ENCODE measurements at regions of chr15 and their contacts with region 1.

Region 1: DNA sequence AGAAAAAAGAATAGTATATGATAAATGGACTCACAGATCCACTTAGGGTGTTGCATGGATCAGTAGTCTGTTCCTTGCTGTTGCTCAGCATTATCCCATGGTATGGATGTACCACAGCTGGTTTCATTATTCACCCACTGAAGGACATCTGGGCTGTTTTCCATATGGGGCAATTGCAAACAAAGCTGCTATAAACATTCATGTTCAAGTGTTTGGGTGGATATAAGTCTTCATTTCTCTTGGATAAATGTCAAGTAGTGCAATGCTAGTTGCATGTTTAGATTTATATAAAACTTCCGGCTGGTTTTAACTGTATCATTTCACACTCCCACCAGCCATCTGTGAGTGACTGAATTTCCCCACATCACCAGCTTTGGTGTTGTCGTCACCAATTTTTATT is 137.7 kb downstream of the ASB7 start:
- DNase-seq: no peak
- H3K4me3 ChIP-seq: no peak overlapping the region
- H3K27ac ChIP-seq: no peak overlapping the region
- H3K4me1 ChIP-seq: no peaks in the 10 kb centered on the region
- H3K27me3 ChIP-seq: no peaks in the 10 kb centered on the region
- CTCF ChIP-seq: no peak

Region 2: GRCh38 chr15:100687582-100688141 is 52.5 kb before region 1 on chr15:
- intact Hi-C with region 1: loop called (anchors 10 kb)
- DNase-seq: no peak
- H3K4me3 ChIP-seq: no peak overlapping the region
- H3K27ac ChIP-seq: peak overlapping the region in 1 of 2 donors; percentile 6
- H3K4me1 ChIP-seq: peaks cover 0 to 3% of the 10 kb centered on the region in 2 donors
- H3K27me3 ChIP-seq: no peaks in the 10 kb centered on the region
- CTCF ChIP-seq: no peak

Region 3: DNA sequence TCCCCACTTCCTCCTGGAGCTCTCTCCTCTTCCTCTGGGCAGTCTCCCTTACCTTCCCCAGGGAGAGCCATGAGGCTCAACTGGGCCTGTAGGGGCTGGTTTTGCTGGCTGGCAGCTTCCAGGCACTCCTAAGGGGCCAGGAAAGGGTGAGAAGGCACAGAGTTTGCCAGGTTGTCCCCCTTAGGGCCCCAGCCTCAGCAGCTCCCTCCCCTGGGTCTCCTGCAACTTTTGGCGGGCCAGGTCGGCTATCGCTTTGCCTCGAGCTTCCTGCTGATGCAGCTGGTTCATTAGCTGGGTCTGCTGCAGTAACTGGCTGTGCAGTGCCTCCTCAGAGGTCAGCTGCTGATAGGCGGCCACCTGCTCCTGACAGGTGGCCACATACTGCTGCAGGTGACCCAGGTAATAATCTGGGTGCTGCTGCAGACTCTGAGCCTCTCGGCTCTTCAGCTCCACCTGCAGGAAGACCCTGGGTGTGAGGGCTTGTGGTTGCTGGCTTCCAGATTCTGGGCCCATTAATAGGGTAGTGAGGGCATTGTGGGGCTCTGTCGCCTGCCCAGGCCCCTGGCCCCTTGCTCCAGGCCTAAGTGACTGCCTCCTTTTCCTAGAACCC is 1033.5 kb after region 1 on chr15:
- intact Hi-C with region 1: no loop called
- DNase-seq: no peak
- H3K4me3 ChIP-seq: no peak overlapping the region
- H3K27ac ChIP-seq: no peak overlapping the region
- H3K4me1 ChIP-seq: no peaks in the 10 kb centered on the region
- H3K27me3 ChIP-seq: no peaks in the 10 kb centered on the region
- CTCF ChIP-seq: no peak

Measured in ascending aorta (tissue), 2 donors.